ENCODE measurements at regions of chr12 and their contacts with region 1.

Region 1: DNA sequence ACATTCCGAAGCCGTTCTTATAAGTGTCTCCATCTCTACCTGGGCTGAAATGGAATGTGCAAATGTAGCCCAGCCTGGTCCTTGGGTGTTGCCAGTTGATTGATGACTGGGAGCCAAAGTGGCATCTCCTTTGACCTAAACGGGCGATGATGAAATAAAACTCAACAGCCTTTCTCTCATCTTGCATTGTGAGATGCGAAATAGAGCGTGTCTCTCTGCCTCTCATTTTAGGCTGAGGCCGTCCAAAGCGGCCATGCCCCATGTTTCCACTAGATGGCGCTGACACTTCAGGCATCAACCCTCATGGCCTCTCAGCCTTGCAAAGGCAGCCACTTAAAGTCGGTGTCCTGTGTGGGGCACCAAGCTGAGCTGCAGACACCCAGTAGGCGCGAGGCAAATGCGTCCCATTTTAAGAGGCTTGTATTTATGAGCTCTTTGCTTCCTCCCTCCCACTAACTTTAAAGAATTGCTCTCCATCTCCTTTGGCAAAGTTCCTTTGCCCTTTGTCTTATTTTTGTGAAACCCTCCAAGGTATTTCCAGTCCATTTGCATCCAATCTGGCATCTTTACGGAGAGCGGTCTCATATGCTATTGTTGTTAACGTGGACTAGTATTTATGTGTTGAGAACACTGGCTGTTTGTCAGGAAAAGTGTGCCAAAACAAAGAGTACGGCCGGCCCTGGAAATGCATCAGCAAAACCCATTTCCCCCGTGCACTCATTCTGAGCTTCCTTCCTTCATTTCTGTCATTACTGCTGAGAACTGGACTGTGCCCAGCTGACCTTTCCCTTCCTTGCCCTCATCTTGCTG is 25.0 kb downstream of the GPRC5A start:
- DNase-seq: peak; percentile 97
- H3K4me3 ChIP-seq: peak overlapping the region in 1 of 3 experiments; percentile 15
- H3K27ac ChIP-seq: peak overlapping the region; percentile 88
- H3K4me1 ChIP-seq: peaks cover 36% of the 10 kb centered on the region
- H3K27me3 ChIP-seq: no peaks in the 10 kb centered on the region
- CTCF ChIP-seq: peak; percentile 96 to 97
- POLR2A ChIP-seq: peak; percentile 21

Region 2: DNA sequence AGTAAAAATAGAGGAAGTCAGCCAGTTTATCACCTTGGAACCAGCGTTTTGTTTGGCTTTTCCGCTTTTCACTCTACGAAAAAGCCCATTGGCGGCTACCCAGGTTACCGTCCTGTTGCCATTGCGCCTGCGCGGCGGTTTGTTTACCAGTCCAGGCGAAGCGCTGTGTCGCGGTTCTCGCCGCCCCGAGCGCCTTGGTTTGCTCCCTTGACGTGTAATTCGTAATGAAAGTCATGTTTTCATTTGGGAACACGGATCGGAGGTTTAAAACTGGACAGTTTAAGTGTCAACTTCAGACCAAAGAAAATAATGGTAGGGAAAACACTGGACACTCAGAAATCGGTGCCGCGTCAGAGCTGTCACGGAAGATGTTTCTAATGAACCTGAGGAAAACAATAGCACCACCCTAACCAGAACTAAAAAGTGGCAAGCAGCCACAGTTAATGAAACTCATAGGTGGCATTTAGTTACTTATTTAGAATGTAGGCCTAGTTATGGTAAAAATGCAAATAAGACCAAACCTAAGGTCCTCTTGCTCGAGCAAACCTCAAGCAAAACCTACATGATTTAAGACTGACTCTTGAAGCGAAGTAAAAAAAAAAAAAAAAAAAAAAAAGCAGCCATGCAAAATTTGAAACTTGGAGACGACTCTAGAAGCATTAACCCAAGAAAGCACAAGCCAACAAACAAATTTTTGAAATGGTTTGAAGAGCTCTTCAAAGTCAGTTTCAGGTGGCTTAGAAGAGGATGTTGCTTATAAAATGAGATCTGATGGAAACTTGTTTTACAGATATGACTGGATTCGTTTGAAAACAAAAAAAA is 219.6 kb before region 1 on chr12:
- CTCF ChIA-PET with region 1: no interaction called
- POLR2A ChIA-PET with region 1: no interaction called
- dilution Hi-C with region 1: no loop called
- intact Hi-C with region 1: no loop called
- DNase-seq: peak; percentile 92
- H3K4me3 ChIP-seq: peak overlapping the region; percentile 45 to 98 (median 88)
- H3K27ac ChIP-seq: peak overlapping the region; percentile 98
- H3K4me1 ChIP-seq: peaks cover 9% of the 10 kb centered on the region
- H3K27me3 ChIP-seq: no peaks in the 10 kb centered on the region
- CTCF ChIP-seq: no peak
- POLR2A ChIP-seq: peak; percentile 61

Region 3: GRCh38 chr12:12837025-12837872 is 79.1 kb before region 1 on chr12:
- CTCF ChIA-PET with region 1: interaction called, 78 read pairs
- POLR2A ChIA-PET with region 1: interaction called, 4 read pairs
- dilution Hi-C with region 1: no loop called
- intact Hi-C with region 1: loop called (anchors 1 kb)
- DNase-seq: peak; percentile 86
- H3K4me3 ChIP-seq: no peak overlapping the region
- H3K27ac ChIP-seq: peak overlapping the region; percentile 91
- H3K4me1 ChIP-seq: peaks cover 55% of the 10 kb centered on the region
- H3K27me3 ChIP-seq: no peaks in the 10 kb centered on the region
- CTCF ChIP-seq: peak; percentile 46 to 51
- POLR2A ChIP-seq: no peak

Region 4: DNA sequence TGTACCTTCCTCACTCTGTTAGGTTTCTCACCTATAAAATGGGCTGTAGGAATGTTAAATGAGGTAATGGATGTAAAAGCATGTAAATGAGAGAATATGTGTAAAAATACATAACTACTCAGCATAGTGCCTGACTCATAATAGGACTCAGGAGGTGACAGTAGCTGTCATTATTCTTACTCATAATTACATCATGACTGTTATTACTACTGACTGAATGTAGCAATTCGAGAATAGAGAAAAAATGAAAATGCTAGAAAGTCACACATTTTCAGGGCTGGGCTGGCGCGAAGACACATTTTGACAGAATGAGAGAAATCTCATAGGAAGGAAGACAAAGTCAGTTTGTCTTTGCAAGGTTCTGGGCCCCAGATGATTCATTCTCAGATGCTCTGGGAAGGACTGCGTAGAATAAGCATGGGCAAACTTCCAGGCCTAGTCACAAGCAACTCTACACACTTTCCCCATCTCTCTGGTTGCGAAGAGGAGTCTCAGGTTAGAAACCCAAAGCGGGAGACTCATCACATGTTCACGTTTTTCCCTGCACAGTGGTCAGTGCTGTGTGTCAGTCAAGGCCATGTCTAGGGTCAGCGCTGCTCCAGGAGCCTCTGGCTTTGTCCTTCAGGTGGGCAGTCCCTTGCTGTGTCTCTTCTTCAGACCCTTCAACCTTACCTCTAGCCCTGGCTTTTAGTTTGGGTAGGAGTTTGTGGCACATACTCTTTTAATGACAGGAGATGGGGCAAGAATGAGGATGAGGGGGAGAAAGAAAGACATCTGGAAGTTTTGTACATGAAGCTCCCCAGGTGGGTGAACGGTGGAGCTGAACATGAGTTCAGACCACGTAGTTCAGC is 16.6 kb before region 1 on chr12:
- CTCF ChIA-PET with region 1: interaction called, 30 read pairs
- POLR2A ChIA-PET with region 1: no interaction called
- dilution Hi-C with region 1: no loop called
- intact Hi-C with region 1: no loop called
- DNase-seq: peak; percentile 81
- H3K4me3 ChIP-seq: no peak overlapping the region
- H3K27ac ChIP-seq: peak overlapping the region; percentile 91
- H3K4me1 ChIP-seq: peaks cover 49% of the 10 kb centered on the region
- H3K27me3 ChIP-seq: no peaks in the 10 kb centered on the region
- CTCF ChIP-seq: no peak
- POLR2A ChIP-seq: no peak

Region 5: DNA sequence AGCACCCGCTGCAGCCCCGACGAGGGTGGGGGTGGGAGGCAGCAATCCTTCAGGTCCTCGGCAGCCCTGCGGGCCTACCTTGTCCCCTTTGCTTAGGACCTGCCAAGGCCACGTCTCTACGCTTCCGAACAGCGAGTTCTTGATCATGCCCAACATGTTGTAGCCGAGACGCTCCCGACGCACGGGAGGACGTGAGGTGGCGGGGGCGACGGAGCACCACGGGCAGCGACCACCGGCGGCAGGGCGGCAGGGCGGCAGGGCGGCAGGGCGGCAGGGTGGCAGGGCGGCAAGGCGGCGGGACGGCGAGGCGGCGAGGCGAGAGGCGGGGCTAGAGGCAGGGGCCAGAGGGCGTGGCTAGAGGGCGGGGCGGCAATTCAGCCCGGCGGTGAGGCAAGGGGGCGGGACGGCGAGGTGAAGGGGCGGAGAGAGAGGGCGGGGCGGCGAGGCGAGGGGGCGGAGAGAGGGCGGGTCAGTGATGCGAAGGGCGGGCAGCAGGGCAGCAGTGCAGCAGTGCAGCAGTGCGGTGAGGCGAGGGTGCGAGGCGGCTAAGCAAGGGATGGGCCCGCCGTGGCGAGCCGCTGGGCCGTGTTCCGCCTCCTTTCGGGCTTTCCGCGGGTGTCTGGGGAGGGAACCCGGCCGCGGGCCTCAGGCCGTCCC is 83.7 kb after region 1 on chr12 and contains the start of gene HEBP1:
- CTCF ChIA-PET with region 1: interaction called, 3 read pairs
- POLR2A ChIA-PET with region 1: no interaction called
- dilution Hi-C with region 1: no loop called
- intact Hi-C with region 1: loop called (anchors 1 kb)
- DNase-seq: peak; percentile 89
- H3K4me3 ChIP-seq: peak within 1 kb of the TSS; percentile 55 to 87 (median 85)
- H3K27ac ChIP-seq: peak within 1 kb of the TSS; percentile 71
- H3K4me1 ChIP-seq: peaks cover 22% of the 10 kb centered on the region
- H3K27me3 ChIP-seq: no peaks in the 10 kb centered on the region
- CTCF ChIP-seq: no peak
- POLR2A ChIP-seq: peak; percentile 91
- total RNA-seq, gene HEBP1: 44.8 and 59.5 TPM in 2 replicates

Region 6: GRCh38 chr12:13033476-13033875 is 117.1 kb after region 1 on chr12:
- CTCF ChIA-PET with region 1: no interaction called
- POLR2A ChIA-PET with region 1: no interaction called
- dilution Hi-C with region 1: no loop called
- intact Hi-C with region 1: no loop called
- DNase-seq: peak; percentile 59
- H3K4me3 ChIP-seq: no peak overlapping the region
- H3K27ac ChIP-seq: peak overlapping the region; percentile 31
- H3K4me1 ChIP-seq: peaks cover 12% of the 10 kb centered on the region
- H3K27me3 ChIP-seq: no peaks in the 10 kb centered on the region
- CTCF ChIP-seq: no peak
- POLR2A ChIP-seq: no peak

Region 7: GRCh38 chr12:13124661-13125505 is 208.5 kb after region 1 on chr12:
- CTCF ChIA-PET with region 1: interaction called, 3 read pairs
- POLR2A ChIA-PET with region 1: no interaction called
- dilution Hi-C with region 1: no loop called
- intact Hi-C with region 1: loop called (anchors 1 kb)
- DNase-seq: peak; percentile 89
- H3K4me3 ChIP-seq: no peak overlapping the region
- H3K27ac ChIP-seq: peak overlapping the region; percentile 90
- H3K4me1 ChIP-seq: peaks cover 20% of the 10 kb centered on the region
- H3K27me3 ChIP-seq: no peaks in the 10 kb centered on the region
- CTCF ChIP-seq: no peak
- POLR2A ChIP-seq: peak; percentile 45

Region 8: GRCh38 chr12:13233830-13234641 is 317.7 kb after region 1 on chr12:
- CTCF ChIA-PET with region 1: interaction called, 7 read pairs
- POLR2A ChIA-PET with region 1: no interaction called
- dilution Hi-C with region 1: no loop called
- intact Hi-C with region 1: loop called (anchors 1 kb)
- DNase-seq: peak; percentile 77
- H3K4me3 ChIP-seq: no peak overlapping the region
- H3K27ac ChIP-seq: no peak overlapping the region
- H3K4me1 ChIP-seq: peaks cover 3% of the 10 kb centered on the region
- H3K27me3 ChIP-seq: no peaks in the 10 kb centered on the region
- CTCF ChIP-seq: peak; percentile 70 to 83
- POLR2A ChIP-seq: no peak

Measured in endothelial cell of umbilical vein (primary cell).